Activated CD8-positive, alpha-beta T cell treated with anti-CD3 and anti-CD28 coated beads for 36 hours (primary cell): ENCODE measurements at regions of chr4 and their contacts with region 1.

Region 1: DNA sequence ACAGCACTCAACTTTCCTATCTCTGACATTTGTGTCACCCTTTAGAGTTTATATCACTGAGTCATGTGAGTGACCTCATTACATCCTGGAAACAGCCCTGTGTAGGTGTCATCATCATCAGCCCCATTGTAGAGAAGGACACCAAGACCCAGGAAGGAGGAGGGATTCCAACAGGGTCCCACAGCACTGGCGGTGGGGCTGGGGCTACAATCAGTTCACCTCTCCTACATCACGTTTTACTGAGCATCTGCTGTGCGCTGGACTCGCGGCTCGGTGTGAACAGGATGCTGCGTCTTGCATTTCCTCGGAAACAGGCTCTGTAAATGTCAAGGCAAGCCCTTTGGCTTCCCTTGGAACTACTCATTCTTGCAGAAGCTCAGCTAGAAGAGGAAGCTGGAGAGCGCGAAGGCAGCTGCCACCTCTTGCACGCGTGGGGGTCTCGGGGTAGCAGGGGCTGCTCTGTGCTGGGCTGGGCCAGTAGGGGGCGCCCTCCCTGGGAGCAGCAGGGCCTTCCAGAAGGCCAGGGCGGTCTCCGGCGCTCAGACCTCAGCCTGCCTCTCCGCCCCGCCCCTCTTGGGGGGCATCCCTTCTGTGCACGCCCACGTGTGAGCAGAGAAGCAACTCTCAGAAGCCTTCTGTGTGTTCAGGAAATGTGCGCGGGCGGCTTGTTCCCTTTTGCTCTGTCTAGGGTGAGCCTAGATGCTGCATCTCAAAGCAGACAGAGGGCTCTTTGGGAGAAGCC is 29.0 kb downstream of the REELD1 start:
- DNase-seq: peak; percentile 93
- ATAC-seq: peak; percentile 87
- H3K4me3 Mint-ChIP-seq: peak overlapping the region; percentile 34
- H3K27ac Mint-ChIP-seq: peak overlapping the region; percentile 93
- H3K4me1 Mint-ChIP-seq: peaks cover 44% of the 10 kb centered on the region
- H3K27me3 Mint-ChIP-seq: no peaks in the 10 kb centered on the region
- CTCF ChIP-seq: peak; percentile 86

Region 2: GRCh38 chr4:146916479-146917076 is 673.3 kb after region 1 on chr4:
- CTCF ChIA-PET with region 1: interaction called, 3 read pairs
- POLR2A ChIA-PET with region 1: no interaction called
- intact Hi-C with region 1: loop called (anchors 2 kb)
- DNase-seq: peak; percentile 42
- ATAC-seq: peak; percentile 27
- H3K4me3 Mint-ChIP-seq: no peak overlapping the region
- H3K27ac Mint-ChIP-seq: no peak overlapping the region
- H3K4me1 Mint-ChIP-seq: no peaks in the 10 kb centered on the region
- H3K27me3 Mint-ChIP-seq: peaks cover 6% of the 10 kb centered on the region
- CTCF ChIP-seq: peak; percentile 65